Caco-2 (cell line): ENCODE measurements at regions of chr17 and their contacts with region 1.

Region 1: DNA sequence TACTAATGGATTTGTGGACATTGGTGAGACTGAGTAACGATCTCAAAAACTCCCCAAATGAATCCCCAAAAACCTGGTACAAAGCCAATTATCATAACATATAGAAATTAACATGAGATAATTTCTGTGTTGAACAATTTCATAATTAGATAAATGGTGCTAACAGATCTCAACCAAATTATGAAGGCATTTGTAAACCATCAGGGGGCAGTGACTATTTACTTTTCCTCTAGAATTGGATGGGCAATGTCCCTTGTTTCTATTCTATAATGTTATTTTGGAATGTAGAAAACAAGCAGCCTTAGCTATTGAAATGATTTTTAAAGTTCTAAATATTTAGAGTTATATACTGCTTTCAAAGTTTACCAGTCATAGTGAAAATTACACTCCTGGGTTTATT is 57.8 kb downstream of the MYH10 start:
- DNase-seq: no peak
- H3K4me3 ChIP-seq: no peak overlapping the region
- H3K4me3 Mint-ChIP-seq: no peak overlapping the region
- H3K27ac Mint-ChIP-seq: no peak overlapping the region
- H3K4me1 ChIP-seq: no peaks in the 10 kb centered on the region
- H3K4me1 Mint-ChIP-seq: no peaks in the 10 kb centered on the region
- H3K27me3 ChIP-seq: no peaks in the 10 kb centered on the region
- H3K27me3 Mint-ChIP-seq: no peaks in the 10 kb centered on the region
- CTCF ChIP-seq: no peak

Region 2: DNA sequence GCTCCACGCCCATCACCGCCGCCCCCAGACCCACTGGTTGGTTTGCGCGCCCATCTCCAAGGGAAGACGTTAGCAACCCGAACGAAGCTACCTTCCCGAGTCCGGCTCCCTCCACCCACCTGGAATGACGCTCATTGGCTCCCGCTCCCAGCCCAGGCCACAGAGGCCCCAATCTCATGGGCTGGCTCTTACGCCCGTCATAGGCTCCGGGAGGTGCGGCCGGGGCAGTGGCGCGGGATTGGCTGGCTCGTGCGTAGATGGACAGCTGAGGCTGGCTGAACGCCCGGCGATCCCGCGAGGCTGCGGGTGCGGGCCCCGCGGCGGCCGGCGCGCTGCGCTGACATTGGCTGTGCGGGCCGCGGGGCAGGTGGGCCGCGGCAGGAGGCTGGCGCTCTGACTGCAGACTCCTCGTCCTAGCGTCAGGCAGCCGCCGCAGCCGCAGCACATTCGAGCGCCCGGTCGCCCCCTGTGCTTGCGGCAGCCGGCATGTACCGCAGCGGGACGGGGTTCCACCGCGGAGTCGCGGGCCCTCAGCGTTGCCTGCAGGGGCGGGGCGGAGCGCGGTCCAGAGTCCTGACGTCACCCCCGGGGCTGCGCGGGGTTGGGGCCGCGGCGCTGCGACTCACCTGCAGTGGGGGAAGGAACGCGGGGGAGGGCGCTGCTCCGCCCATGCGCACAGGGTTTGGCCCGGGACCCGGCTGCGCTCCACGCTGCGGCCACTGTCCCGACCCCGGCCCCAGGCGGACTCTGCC is 58.2 kb after region 1 on chr17:
- CTCF ChIA-PET with region 1: no interaction called
- POLR2A ChIA-PET with region 1: interaction called, 5 read pairs
- intact Hi-C with region 1: loop called (anchors 5 kb)
- DNase-seq: peak; percentile 96 to 99
- H3K4me3 ChIP-seq: peak overlapping the region; percentile 74
- H3K4me3 Mint-ChIP-seq: peak overlapping the region; percentile 93
- H3K27ac Mint-ChIP-seq: peak overlapping the region; percentile 84
- H3K4me1 ChIP-seq: no peaks in the 10 kb centered on the region; the same call in 1 of the 2 replicates
- H3K4me1 Mint-ChIP-seq: peaks cover 13% of the 10 kb centered on the region
- H3K27me3 ChIP-seq: no peaks in the 10 kb centered on the region
- H3K27me3 Mint-ChIP-seq: no peaks in the 10 kb centered on the region
- CTCF ChIP-seq: no peak

Region 3: GRCh38 chr17:8745586-8746500 is 173.1 kb after region 1 on chr17:
- CTCF ChIA-PET with region 1: no interaction called
- POLR2A ChIA-PET with region 1: no interaction called
- intact Hi-C with region 1: loop called (anchors 1 kb)
- DNase-seq: peak in 1 of 2 experiments; percentile 61
- H3K4me3 ChIP-seq: peak overlapping the region; percentile 47
- H3K4me3 Mint-ChIP-seq: peak overlapping the region; percentile 59
- H3K27ac Mint-ChIP-seq: no peak overlapping the region
- H3K4me1 ChIP-seq: no peaks in the 10 kb centered on the region
- H3K4me1 Mint-ChIP-seq: no peaks in the 10 kb centered on the region
- H3K27me3 ChIP-seq: no peaks in the 10 kb centered on the region; the same call in 1 of the 2 replicates
- H3K27me3 Mint-ChIP-seq: no peaks in the 10 kb centered on the region
- CTCF ChIP-seq: peak; percentile 51 to 75